ENCODE measurements at regions of chr3 and their contacts with region 1.

Region 1: DNA sequence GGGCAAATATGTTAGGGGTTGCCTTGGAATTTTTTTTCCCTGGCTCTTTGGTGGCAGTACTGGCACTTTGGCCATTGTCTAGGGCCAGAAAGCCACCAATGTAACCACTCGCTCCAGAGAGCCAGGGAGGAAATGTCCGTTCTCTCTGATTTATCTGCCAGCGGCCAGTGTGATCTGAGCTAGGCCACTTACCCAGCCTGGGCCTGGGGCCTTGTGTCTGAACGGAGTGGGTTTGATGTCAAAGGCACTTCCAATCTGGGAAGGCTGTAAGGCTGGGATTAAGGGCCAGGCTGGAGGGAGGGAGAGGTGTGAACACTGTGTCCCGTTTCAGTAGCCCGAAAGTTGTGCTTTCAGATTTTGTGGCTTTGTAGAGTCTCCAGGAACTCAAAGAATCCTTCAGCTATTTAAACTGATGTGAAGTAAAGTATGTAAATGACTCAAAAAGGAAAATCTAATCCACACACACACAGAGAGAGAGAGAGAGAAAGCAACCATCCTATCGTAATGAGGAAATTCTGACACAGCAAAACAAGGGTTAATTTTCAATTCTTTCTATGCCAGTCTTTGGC is 271.0 kb downstream of the PDZRN3 start:
- DNase-seq: no peak

Region 2: GRCh38 chr3:73384091-73384906 is 30.6 kb after region 1 on chr3:
- intact Hi-C with region 1: loop called in 1 of 2 experiments (anchors 1 kb)
- DNase-seq: no peak